ENCODE measurements at regions of chr19 and their contacts with region 1.

Region 1: DNA sequence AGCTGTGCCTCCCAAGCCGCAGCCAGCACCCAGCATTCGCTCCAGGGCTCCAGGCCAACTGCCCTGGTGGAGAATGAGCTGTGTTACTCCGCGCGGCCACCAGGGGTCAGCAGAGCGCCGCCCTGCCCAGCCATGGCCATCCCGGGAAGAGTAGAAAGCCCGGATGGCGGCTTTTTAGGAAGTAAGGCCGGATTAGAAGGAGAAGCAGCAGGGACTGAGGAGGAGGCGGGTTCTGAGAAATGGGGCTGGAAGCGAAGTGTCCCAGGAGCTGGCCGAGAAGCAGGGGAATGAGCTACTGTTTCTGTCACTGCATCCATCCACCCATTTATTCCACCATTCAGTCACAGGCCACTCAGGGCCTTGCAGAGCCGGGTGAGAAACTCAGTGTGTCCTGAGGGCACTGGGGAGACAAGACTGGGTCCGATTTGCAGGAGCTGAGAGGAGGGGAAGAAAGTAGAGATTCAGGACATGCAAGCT is 6.6 kb upstream of the NPAS1 start:
- DNase-seq: no peak
- ATAC-seq: peak; percentile 95
- H3K4me3 ChIP-seq: no peak overlapping the region
- H3K27ac ChIP-seq: no peak overlapping the region
- H3K4me1 ChIP-seq: no peaks in the 10 kb centered on the region
- H3K27me3 ChIP-seq: no peaks in the 10 kb centered on the region
- CTCF ChIP-seq: peak; percentile 95 to 99 (median 97)
- EP300 ChIP-seq: no peak
- POLR2A ChIP-seq: no peak
- RAD21 ChIP-seq: peak; percentile 87

Region 2: DNA sequence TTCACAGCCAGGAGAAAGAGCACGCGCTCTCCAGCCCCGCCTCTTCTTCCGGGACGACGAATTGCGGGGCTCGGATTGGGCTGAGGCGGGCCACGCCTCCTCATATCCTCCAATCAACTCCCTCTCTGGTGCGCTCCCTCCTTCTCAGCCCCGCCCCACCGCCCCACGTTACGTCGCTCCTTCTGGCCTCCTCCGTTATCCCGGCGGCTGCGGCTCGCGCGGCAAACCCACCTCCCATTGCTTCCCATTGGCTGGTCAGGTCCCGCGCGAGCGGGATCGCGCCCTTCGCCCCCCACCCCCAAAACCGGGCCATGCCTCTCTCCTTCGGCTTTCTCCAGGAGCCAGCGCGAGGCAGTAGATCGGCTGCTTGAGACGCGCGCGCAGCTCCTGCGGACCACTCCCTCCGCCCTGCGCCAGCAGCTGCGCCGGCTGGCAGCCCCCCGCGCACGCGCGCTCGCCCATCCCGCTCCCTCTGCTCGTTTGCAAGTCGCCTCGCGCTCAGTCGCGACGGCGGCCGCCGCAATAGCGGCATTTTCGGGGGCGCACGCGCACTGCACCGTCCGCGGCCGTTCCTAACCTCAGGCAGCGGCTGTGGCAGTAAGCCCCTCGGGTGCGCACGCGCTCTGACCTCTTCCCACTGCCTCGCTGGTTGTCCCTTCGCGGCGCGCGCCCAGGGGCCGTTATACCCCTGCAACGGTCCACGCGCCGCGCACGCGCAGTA is 152.8 kb before region 1 on chr19:
- CTCF ChIA-PET with region 1: interaction called, 26 read pairs
- POLR2A ChIA-PET with region 1: no interaction called
- RAD21 ChIA-PET with region 1: interaction called, 5 read pairs
- SMC1A ChIA-PET with region 1: interaction called, 13 read pairs
- in situ Hi-C with region 1: no loop called
- intact Hi-C with region 1: no loop called
- DNase-seq: peak; percentile 92
- ATAC-seq: peak; percentile 89
- H3K4me3 ChIP-seq: peak overlapping the region; percentile 69
- H3K27ac ChIP-seq: peak overlapping the region; percentile 92
- H3K4me1 ChIP-seq: peaks cover 12% of the 10 kb centered on the region; the same call in 1 of the 2 replicates
- H3K27me3 ChIP-seq: no peaks in the 10 kb centered on the region
- CTCF ChIP-seq: no peak
- EP300 ChIP-seq: 0 out of 4 replicates have a peak, but pooled peaks of 1 of the 2 experiments have one; percentile 25
- POLR2A ChIP-seq: peak; percentile 90
- RAD21 ChIP-seq: no peak

Region 3: GRCh38 chr19:46998445-46999125 is 14.5 kb before region 1 on chr19:
- CTCF ChIA-PET with region 1: interaction called, 10 read pairs
- POLR2A ChIA-PET with region 1: no interaction called
- RAD21 ChIA-PET with region 1: interaction called, 3 read pairs
- SMC1A ChIA-PET with region 1: interaction called, 4 read pairs
- in situ Hi-C with region 1: no loop called
- intact Hi-C with region 1: no loop called
- DNase-seq: no peak
- ATAC-seq: no peak
- H3K4me3 ChIP-seq: no peak overlapping the region
- H3K27ac ChIP-seq: no peak overlapping the region
- H3K4me1 ChIP-seq: no peaks in the 10 kb centered on the region
- H3K27me3 ChIP-seq: no peaks in the 10 kb centered on the region
- CTCF ChIP-seq: no peak
- EP300 ChIP-seq: no peak
- POLR2A ChIP-seq: no peak
- RAD21 ChIP-seq: no peak

Region 4: DNA sequence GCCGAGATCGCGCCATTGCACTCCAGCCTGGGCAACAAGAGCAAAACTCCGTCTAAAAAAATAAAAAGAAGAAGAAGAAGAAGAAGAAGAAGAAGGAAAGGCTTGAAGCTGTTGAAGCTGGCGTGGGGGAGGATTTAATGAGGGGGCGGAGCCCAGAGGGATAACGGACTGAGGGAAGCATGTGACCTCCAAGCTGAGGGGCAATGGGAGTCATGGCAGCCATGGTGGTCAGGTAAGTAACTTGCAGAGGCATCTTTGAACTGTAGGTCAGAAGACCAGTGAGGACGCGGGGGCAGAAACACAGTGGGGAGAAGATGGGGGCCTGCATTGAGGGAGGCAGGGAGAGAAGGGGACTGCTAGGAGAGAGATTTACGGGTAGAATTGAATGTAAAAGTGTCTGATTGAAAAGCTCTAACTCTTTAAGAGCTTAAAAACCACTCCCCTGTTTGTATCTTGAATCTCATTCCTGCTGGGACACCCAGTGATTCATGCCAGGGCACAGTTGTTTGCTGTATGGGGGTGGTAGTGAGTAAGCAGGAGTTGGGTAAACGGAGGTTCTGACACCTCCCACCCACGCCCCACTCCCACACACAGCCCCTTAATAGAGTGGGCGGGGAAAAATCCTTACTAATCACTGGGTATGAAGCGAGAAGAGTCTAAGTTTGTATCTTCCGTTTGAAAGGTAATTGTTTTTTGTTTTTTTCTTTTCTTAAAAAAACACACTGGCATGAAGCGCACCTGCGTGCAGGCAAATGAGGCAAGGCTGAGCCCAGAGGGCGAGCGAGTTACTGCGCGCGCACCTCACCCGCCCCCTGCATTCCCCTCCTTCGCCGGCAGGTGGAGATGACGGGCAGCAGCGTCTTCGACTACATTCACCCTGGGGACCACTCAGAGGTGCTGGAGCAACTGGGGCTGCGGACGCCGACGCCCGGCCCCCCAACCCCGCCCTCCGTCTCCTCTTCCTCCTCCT is 22.3 kb after region 1 on chr19:
- CTCF ChIA-PET with region 1: interaction called, 67 read pairs
- POLR2A ChIA-PET with region 1: no interaction called
- RAD21 ChIA-PET with region 1: interaction called, 15 read pairs
- SMC1A ChIA-PET with region 1: interaction called, 18 read pairs
- in situ Hi-C with region 1: no loop called
- intact Hi-C with region 1: loop called (anchors 1 kb)
- DNase-seq: peak; percentile 77
- ATAC-seq: peak; percentile 95
- H3K4me3 ChIP-seq: peak overlapping the region; percentile 77
- H3K27ac ChIP-seq: no peak overlapping the region
- H3K4me1 ChIP-seq: peaks cover 6% of the 10 kb centered on the region; the same call in 1 of the 2 replicates
- H3K27me3 ChIP-seq: no peaks in the 10 kb centered on the region; a peak in 1 of 4 replicates
- CTCF ChIP-seq: peak; percentile 95 to 97 (median 96)
- EP300 ChIP-seq: no peak
- POLR2A ChIP-seq: peak; percentile 50
- RAD21 ChIP-seq: peak; percentile 54; the same call in 1 of the 2 replicates

Region 5: GRCh38 chr19:47070756-47071155 is 57.7 kb after region 1 on chr19:
- CTCF ChIA-PET with region 1: no interaction called
- POLR2A ChIA-PET with region 1: no interaction called
- RAD21 ChIA-PET with region 1: no interaction called
- SMC1A ChIA-PET with region 1: no interaction called
- in situ Hi-C with region 1: no loop called
- intact Hi-C with region 1: no loop called
- DNase-seq: no peak
- ATAC-seq: no peak
- H3K4me3 ChIP-seq: no peak overlapping the region
- H3K27ac ChIP-seq: no peak overlapping the region
- H3K4me1 ChIP-seq: no peaks in the 10 kb centered on the region
- H3K27me3 ChIP-seq: no peaks in the 10 kb centered on the region
- CTCF ChIP-seq: no peak
- EP300 ChIP-seq: no peak
- POLR2A ChIP-seq: no peak
- RAD21 ChIP-seq: no peak

Region 6: GRCh38 chr19:47124937-47125668 is 112.0 kb after region 1 on chr19:
- CTCF ChIA-PET with region 1: interaction called, 45 read pairs
- POLR2A ChIA-PET with region 1: no interaction called
- RAD21 ChIA-PET with region 1: interaction called, 25 read pairs
- SMC1A ChIA-PET with region 1: interaction called, 13 read pairs
- in situ Hi-C with region 1: no loop called
- intact Hi-C with region 1: loop called (anchors 2 kb)
- DNase-seq: no peak
- ATAC-seq: peak; percentile 76
- H3K4me3 ChIP-seq: no peak overlapping the region
- H3K27ac ChIP-seq: no peak overlapping the region
- H3K4me1 ChIP-seq: no peaks in the 10 kb centered on the region; the same call in 1 of the 2 replicates
- H3K27me3 ChIP-seq: no peaks in the 10 kb centered on the region
- CTCF ChIP-seq: peak; percentile 59 to 81 (median 65)
- EP300 ChIP-seq: no peak
- POLR2A ChIP-seq: no peak
- RAD21 ChIP-seq: peak; percentile 89

Region 7: DNA sequence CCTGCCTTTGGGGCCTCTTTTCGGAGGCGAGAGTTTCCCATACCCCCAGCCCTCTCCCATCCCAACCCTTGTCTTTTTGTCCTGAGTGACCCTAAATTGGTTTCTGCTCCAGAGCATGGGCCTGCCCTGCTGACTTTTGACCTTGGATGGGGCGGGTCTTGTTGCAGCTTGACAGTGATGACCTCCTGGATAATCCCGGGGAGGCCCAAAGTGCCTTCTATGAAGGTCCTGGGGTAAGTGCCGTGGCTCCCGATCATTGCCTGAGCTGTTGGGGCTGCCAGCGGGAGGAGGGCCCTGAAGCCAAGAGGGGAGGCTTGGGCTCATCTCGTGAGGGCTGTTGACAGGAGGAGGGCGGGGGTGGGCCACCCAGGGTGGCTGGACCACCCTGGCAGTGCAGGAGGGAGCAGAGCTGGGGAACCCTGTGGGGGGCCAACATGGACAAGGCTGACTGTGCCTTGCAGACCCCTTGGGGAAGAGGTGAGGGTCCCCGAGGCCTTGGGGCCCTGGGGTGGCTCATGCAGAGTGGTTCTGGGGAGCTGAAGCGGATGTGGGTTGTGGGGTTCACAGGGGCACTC is 662.7 kb after region 1 on chr19:
- CTCF ChIA-PET with region 1: no interaction called
- POLR2A ChIA-PET with region 1: no interaction called
- RAD21 ChIA-PET with region 1: no interaction called
- SMC1A ChIA-PET with region 1: no interaction called
- in situ Hi-C with region 1: no loop called
- intact Hi-C with region 1: no loop called
- DNase-seq: no peak
- ATAC-seq: no peak
- H3K4me3 ChIP-seq: no peak overlapping the region
- H3K27ac ChIP-seq: no peak overlapping the region
- H3K4me1 ChIP-seq: no peaks in the 10 kb centered on the region
- H3K27me3 ChIP-seq: no peaks in the 10 kb centered on the region
- CTCF ChIP-seq: no peak
- EP300 ChIP-seq: no peak
- POLR2A ChIP-seq: no peak
- RAD21 ChIP-seq: no peak

Measured in GM12878 (cell line).